Transverse colon (tissue), 4 donors: ENCODE measurements at regions of chr6 and their contacts with region 1.

Region 1: DNA sequence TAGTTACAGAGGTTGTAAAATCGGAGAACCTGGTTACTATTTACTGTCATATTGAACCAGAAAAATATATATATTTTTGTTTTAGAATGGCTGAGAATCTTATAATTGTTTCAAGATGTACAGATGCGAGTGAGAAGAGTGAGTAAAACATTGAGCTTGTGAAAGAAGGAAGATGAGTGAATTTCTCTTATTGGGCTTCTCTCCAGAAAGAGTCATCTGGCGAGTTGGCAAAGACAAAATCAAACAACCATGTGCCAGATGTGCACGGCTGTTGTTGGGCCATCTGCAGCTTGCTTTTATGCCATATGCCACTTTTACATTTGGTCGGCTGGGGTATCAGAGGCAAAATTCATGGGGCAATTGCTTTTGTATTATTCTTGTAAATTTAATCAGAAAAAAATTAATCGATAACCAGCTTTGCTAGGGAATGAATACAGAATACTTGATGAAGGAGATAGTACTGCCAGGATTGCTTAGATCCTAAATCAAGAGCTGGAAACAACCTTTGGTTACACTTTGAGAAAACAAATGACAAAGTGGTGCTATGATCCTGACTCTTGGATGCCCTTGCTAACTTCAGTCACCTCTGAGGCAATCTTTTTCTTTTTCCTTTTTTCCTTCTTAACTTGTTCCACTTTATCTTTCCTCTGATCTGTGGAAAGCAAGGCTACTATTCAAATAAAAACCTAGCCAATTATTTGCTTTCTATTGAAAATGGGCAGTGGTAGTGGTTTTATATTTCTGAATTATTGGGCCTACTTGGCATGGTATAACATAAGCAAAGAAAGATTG is 97.1 kb upstream of the GRIK2 start:
- DNase-seq: no peak
- H3K4me3 ChIP-seq: no peak overlapping the region
- H3K27ac ChIP-seq: no peak overlapping the region
- H3K4me1 ChIP-seq: no peaks in the 10 kb centered on the region
- H3K27me3 ChIP-seq: no peaks in the 10 kb centered on the region
- CTCF ChIP-seq: no peak
- EP300 ChIP-seq: no peak
- POLR2A ChIP-seq: no peak

Region 2: GRCh38 chr6:101279410-101279809 is 17.0 kb before region 1 on chr6:
- in situ Hi-C with region 1: no loop called
- intact Hi-C with region 1: loop called (anchors 1 kb)
- DNase-seq: no peak
- H3K4me3 ChIP-seq: no peak overlapping the region
- H3K27ac ChIP-seq: no peak overlapping the region
- H3K4me1 ChIP-seq: no peaks in the 10 kb centered on the region
- H3K27me3 ChIP-seq: no peaks in the 10 kb centered on the region
- CTCF ChIP-seq: no peak
- EP300 ChIP-seq: no peak
- POLR2A ChIP-seq: no peak

Region 3: GRCh38 chr6:101326411-101326810 is 30.0 kb after region 1 on chr6:
- in situ Hi-C with region 1: no loop called
- intact Hi-C with region 1: no loop called
- DNase-seq: no peak
- H3K4me3 ChIP-seq: no peak overlapping the region
- H3K27ac ChIP-seq: no peak overlapping the region
- H3K4me1 ChIP-seq: no peaks in the 10 kb centered on the region
- H3K27me3 ChIP-seq: no peaks in the 10 kb centered on the region
- CTCF ChIP-seq: no peak
- EP300 ChIP-seq: no peak
- POLR2A ChIP-seq: no peak

Region 4: DNA sequence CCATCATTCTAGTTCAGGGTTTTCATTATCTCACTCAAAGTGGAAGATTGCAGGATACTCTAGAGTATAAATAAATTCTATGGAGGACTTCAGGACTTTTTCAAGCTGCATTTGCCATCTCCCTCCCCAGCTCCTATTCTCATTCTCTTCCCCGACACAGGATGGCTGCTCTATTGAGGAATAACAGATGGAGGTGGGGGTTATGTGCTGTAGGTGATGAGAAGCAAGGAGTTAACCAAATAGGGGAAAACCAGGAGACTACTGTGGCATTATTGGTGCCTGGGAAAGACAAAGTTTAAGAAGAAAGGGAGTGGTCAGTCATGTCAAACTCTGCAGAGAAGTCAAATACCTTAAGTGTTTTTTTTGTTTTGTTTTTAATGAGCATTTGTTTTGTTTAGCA is 206.5 kb after region 1 on chr6:
- in situ Hi-C with region 1: no loop called
- intact Hi-C with region 1: no loop called
- DNase-seq: no peak
- H3K4me3 ChIP-seq: no peak overlapping the region
- H3K27ac ChIP-seq: no peak overlapping the region
- H3K4me1 ChIP-seq: peaks cover 0 to 4% (median 0%) of the 10 kb centered on the region in 4 donors
- H3K27me3 ChIP-seq: no peaks in the 10 kb centered on the region
- CTCF ChIP-seq: no peak
- EP300 ChIP-seq: no peak
- POLR2A ChIP-seq: no peak